ENCODE measurements at regions of chr19 and their contacts with region 1.

Region 1: DNA sequence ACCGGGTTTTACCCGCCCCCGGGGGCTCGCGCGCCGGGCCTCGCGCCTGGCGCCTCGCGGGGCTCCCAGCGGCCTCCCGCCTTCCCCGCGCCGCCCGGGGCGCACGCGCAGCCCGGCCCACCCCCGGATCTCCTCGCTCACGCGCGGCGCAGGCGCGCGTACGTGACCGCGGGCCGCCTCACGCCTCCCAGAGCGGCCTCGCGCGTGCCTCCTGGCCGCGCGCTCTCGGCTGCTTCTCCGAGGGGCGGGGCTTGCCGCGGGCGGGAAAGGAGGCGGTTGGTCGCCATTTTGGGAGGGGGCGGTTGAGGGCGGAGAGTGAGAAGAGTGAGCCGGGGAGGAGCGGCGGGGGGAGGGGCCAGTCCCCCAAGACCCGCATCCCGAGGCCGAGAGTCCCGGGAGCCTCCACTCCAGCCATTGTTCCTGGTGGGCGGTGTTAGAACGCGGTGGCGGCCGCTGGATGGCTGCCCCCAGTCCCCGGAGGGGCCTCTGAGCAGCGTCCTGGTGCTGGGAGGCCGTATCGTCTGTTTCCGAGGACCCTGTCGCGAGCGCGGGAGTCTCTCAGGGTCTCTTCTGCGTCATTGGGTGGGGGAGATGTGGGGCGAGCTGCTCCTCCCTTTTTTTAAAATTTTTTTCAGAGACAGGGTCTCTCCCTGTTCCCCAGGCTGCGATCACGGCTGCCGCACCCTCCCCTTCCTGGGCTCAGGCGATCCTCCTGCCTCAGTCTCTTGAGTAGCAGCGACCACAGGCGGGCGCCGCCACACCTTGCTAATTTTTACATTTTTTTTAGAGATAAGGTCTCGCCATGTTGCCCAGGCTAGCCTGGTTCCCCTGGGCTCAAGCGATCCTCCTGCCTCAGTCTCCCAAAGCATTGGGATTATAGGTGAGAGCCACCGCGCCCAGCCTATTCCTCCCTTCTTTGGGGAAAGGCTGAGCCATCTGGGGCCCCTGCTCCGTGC is at the start of gene ZNF541:
- DNase-seq: peak; percentile 80 to 96 (median 88)
- ATAC-seq: peak; percentile 88
- H3K4me3 ChIP-seq: peak within 1 kb of the TSS; percentile 63
- H3K4me3 Mint-ChIP-seq: peak within 1 kb of the TSS; percentile 76
- H3K27ac ChIP-seq: peak within 1 kb of the TSS in 1 of 2 donors; percentile 34
- H3K27ac Mint-ChIP-seq: peak within 1 kb of the TSS; percentile 15
- H3K4me1 ChIP-seq: peaks cover 48% of the 10 kb centered on the region
- H3K4me1 Mint-ChIP-seq: peaks cover 42% of the 10 kb centered on the region
- H3K27me3 ChIP-seq: no peaks in the 10 kb centered on the region
- H3K27me3 Mint-ChIP-seq: no peaks in the 10 kb centered on the region
- CTCF ChIP-seq: no peak
- total RNA-seq, gene ZNF541: 0.81 to 0.88 TPM

Region 2: DNA sequence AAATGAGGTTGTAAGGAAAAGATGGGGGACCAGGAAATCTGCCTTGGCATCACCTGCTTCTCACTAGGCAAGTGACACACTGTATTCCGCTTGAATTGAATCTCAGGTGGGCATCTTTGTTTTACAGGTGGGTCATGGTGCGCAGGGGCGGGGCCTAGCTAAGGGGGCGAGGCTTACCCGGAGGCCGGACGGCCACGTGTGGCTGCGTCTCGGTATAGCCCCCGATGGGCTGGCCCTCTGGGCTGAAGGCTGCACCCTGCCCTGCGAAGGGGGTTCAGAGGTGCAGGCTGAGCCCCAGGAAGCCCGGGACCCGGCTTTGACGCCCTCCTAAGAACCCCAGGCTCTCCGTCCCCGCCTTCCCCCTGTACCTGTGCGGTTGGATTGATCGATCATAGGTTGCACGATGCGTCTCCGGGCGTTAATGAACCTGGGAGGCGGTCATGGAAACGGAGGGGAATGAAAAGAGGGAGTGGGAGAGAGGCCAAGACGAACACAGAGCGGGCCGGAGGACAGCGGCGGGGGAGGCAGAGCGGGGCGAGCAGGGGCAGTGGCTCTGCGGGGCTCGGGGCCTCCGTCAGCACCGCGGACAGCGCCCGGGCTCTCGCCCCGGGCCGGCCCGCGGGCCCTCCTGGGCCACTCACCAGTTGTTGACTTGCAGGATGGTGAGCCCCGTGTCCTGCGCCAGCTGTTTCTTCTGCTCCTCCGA is 166.5 kb before region 1 on chr19:
- CTCF ChIA-PET with region 1: no interaction called
- POLR2A ChIA-PET with region 1: no interaction called
- intact Hi-C with region 1: no loop called
- DNase-seq: peak in 2 of 14 experiments; percentile 31 to 37
- ATAC-seq: no peak
- H3K4me3 ChIP-seq: no peak overlapping the region
- H3K4me3 Mint-ChIP-seq: no peak overlapping the region
- H3K27ac ChIP-seq: no peak overlapping the region
- H3K27ac Mint-ChIP-seq: no peak overlapping the region
- H3K4me1 ChIP-seq: no peaks in the 10 kb centered on the region
- H3K4me1 Mint-ChIP-seq: no peaks in the 10 kb centered on the region
- H3K27me3 ChIP-seq: peaks cover 21 to 34% of the 10 kb centered on the region in 2 experiments
- H3K27me3 Mint-ChIP-seq: peaks cover 57% of the 10 kb centered on the region
- CTCF ChIP-seq: no peak

Region 3: DNA sequence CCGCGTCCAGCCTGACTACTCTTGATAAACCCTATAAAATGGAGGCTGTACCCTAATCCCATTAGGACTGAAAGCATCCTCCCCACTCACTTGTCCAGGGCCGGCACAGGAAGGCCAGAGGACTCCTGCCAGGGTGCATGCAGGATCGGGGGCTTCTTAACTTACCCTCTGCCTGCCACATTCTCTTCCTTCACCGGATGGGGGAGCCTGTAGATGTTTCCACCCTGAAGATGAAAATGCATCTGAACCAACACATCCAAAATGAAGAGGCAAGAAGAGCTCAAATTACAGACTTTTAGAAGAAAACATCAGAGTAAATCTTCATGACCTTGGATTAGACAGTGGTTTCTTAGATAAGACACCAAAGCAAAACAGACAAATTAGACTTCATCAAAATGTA is 32.6 kb before region 1 on chr19:
- CTCF ChIA-PET with region 1: no interaction called
- POLR2A ChIA-PET with region 1: no interaction called
- intact Hi-C with region 1: loop called in 1 of 2 experiments (anchors 5 kb)
- DNase-seq: peak in 2 of 14 experiments; percentile 30 to 35
- ATAC-seq: no peak
- H3K4me3 ChIP-seq: no peak overlapping the region
- H3K4me3 Mint-ChIP-seq: no peak overlapping the region
- H3K27ac ChIP-seq: peak overlapping the region in 1 of 2 donors; percentile 19
- H3K27ac Mint-ChIP-seq: peak overlapping the region; percentile 79
- H3K4me1 ChIP-seq: peaks cover 40% of the 10 kb centered on the region
- H3K4me1 Mint-ChIP-seq: peaks cover 21% of the 10 kb centered on the region
- H3K27me3 ChIP-seq: peaks cover 11 to 19% of the 10 kb centered on the region in 2 experiments
- H3K27me3 Mint-ChIP-seq: peaks cover 10% of the 10 kb centered on the region
- CTCF ChIP-seq: no peak